Activated naive CD4-positive, alpha-beta T cell treated with anti-CD3 and anti-CD28 coated beads, Interleukin-2, amount 10 ng/mL, durations not matched to agents 7 days and 5 days (primary cell): ENCODE measurements at regions of chr6 and their contacts with region 1.

Region 1: GRCh38 chr6:34027445-34027936 is 118.4 kb downstream of the GRM4 start:
- DNase-seq: peak; percentile 74
- H3K4me3 Mint-ChIP-seq: no peak overlapping the region
- H3K27ac Mint-ChIP-seq: no peak overlapping the region
- H3K4me1 Mint-ChIP-seq: no peaks in the 10 kb centered on the region
- H3K27me3 Mint-ChIP-seq: peaks cover 18% of the 10 kb centered on the region

Region 2: GRCh38 chr6:33744001-33744848 is 283.3 kb before region 1 on chr6:
- CTCF ChIA-PET with region 1: interaction called, 20 read pairs
- DNase-seq: peak; percentile 80
- H3K4me3 Mint-ChIP-seq: no peak overlapping the region
- H3K27ac Mint-ChIP-seq: no peak overlapping the region
- H3K4me1 Mint-ChIP-seq: no peaks in the 10 kb centered on the region
- H3K27me3 Mint-ChIP-seq: peaks cover 66% of the 10 kb centered on the region

Region 3: GRCh38 chr6:33771146-33772081 is 256.1 kb before region 1 on chr6:
- CTCF ChIA-PET with region 1: interaction called, 167 read pairs
- DNase-seq: peak; percentile 70
- H3K4me3 Mint-ChIP-seq: no peak overlapping the region
- H3K27ac Mint-ChIP-seq: peak overlapping the region; percentile 6
- H3K4me1 Mint-ChIP-seq: peaks cover 6% of the 10 kb centered on the region
- H3K27me3 Mint-ChIP-seq: peaks cover 33% of the 10 kb centered on the region

Region 4: DNA sequence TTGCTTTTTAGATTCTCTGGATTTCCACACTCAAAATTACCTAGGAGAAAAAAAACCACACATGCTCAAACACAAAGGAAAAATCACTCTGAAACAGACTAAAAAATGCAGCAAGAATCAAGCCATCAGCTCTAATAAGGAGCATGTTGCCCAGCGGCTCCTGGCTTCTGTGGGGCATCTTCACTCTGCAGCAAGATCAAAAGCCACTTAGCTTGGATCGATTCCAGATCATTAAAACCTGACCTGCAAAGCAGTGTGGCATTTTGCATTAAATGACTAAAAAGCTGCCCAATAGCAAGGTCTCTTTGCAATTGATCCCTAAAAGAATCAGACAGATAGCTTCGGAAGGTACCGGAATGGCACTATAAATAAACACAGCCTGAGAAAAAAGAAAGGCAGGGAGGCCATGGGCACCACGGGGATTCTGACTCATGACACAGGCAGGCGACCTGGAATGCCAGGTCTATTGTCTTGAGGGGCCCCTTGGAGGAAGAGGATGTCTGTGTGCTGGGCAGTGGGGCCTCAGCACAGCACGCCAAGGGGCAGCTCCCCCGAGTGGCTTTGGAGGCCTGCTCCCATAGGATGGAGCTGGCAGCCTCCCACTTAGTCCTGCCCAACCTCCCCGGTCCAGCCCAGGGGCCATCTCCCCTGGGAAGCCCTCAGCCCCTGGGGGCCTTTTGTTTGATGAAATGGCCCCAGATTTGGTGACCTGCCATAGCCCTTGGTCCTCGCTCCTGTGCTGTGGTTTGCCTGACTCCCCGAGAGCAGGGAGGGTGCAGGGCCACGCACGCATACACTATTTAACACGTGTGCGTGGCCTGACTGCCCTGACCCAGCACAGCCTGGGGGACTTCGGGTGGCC is 246.1 kb before region 1 on chr6:
- CTCF ChIA-PET with region 1: interaction called, 10 read pairs
- DNase-seq: no peak
- H3K4me3 Mint-ChIP-seq: no peak overlapping the region
- H3K27ac Mint-ChIP-seq: no peak overlapping the region
- H3K4me1 Mint-ChIP-seq: peaks cover 26% of the 10 kb centered on the region
- H3K27me3 Mint-ChIP-seq: no peaks in the 10 kb centered on the region

Region 5: DNA sequence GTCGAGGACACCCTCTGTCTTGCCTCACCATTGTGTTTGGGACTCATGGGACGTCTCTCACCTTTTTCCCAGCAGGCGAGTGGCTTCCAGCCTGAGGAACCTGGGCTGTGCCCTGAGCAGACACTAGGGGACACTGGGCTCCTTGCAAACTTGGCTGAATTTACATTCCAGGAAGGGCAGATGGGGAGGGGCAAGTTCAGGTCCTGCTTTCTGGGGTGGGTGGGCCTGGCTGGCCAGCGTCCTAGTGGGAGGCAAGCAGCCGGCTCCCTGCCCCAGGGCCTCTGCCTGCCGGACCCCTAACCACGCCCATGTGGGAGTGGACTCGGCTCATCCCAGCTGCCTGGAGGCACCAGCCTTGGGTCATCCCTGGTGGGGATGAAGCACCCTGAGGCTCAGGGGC is 175.5 kb before region 1 on chr6:
- CTCF ChIA-PET with region 1: interaction called, 118 read pairs
- DNase-seq: peak; percentile 59
- H3K4me3 Mint-ChIP-seq: no peak overlapping the region
- H3K27ac Mint-ChIP-seq: no peak overlapping the region
- H3K4me1 Mint-ChIP-seq: peaks cover 16% of the 10 kb centered on the region
- H3K27me3 Mint-ChIP-seq: peaks cover 98% of the 10 kb centered on the region

Region 6: GRCh38 chr6:33860706-33861474 is 166.6 kb before region 1 on chr6:
- CTCF ChIA-PET with region 1: interaction called, 118 read pairs
- DNase-seq: peak; percentile 65
- H3K4me3 Mint-ChIP-seq: no peak overlapping the region
- H3K27ac Mint-ChIP-seq: peak overlapping the region; percentile 33
- H3K4me1 Mint-ChIP-seq: peaks cover 55% of the 10 kb centered on the region
- H3K27me3 Mint-ChIP-seq: peaks cover 83% of the 10 kb centered on the region

Region 7: GRCh38 chr6:33904050-33904746 is 123.3 kb before region 1 on chr6:
- CTCF ChIA-PET with region 1: interaction called, 10 read pairs
- DNase-seq: peak; percentile 95
- H3K4me3 Mint-ChIP-seq: peak overlapping the region; percentile 63
- H3K27ac Mint-ChIP-seq: peak overlapping the region; percentile 98
- H3K4me1 Mint-ChIP-seq: peaks cover 85% of the 10 kb centered on the region
- H3K27me3 Mint-ChIP-seq: peaks cover 7% of the 10 kb centered on the region

Region 8: DNA sequence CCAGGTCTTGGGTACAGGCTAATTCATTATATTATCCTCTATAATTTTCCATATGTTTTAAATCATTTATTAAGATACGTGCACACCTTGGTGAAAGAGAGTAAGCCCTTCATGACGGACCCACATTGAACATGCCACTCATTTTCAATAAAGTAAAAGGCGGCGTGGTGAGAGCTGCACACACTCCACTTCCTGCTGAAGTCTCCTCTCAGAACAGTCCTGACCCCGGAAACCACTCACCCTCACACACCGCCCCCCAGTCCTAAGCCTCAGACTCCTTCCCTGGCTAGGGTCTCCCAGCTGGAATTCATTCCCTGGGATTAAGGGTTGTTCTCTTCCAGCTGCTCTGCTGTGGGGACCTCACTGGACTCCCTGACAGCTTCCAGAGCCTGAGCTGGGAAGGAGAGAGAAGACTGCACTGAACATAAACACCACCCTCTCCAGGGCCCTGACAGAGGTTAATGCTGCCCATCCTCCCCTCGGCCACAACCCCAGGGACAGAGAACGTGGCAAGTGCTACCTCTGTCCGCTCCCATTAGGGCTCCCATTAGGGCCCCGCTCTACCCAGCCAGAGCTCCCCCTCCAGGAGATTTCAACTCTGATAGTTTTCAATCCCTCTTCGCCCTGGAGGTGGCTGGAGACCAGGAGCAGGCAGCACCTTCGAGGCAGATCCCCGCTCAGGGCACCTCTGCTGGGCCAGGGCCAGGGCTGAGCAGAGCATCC is 93.6 kb after region 1 on chr6:
- CTCF ChIA-PET with region 1: no interaction called
- DNase-seq: no peak
- H3K4me3 Mint-ChIP-seq: no peak overlapping the region
- H3K27ac Mint-ChIP-seq: no peak overlapping the region
- H3K4me1 Mint-ChIP-seq: no peaks in the 10 kb centered on the region
- H3K27me3 Mint-ChIP-seq: peaks cover 38% of the 10 kb centered on the region